ENCODE measurements at regions of chr1 and their contacts with region 1.

Region 1: DNA sequence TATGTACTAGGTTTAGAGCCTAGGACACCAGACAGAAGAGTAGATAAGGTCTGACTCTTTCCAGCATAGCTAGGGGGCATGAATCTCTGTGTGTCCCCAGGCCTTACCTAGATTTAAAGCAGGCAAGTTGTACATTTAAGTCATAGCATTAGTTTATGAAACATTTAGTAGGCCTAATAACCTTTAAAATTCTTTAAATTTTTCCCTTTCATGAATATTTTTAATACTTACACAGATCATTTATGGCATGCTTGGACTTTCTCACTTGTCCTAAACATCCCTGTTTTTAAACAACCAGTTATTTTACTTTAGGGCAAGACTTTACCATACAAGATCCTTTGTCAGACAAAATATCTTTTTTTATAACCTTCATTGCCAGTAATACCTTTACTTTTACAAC is 258.4 kb upstream of the ZRANB2 start:
- DNase-seq: no peak
- H3K4me3 ChIP-seq: no peak overlapping the region
- H3K27me3 ChIP-seq: no peaks in the 10 kb centered on the region
- CTCF ChIP-seq: no peak

Region 2: DNA sequence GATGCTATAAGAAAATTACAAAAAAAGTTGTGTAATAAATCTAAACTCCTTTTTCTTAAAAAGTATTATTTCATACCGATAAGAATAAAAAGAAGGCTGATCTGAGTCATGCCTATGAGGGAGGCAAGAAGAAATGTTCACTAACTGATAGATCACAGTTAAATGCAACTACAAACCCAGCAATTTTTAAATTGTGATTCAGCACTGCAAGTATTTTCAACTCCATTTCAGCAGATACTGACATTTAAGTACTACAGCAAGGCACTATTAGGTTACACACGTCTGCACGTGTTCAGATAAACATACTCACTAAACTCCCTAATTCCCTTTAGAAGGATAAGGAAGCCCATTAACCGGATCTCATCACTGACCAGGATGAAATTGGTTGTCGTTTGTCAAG is 45.1 kb before region 1 on chr1:
- CTCF ChIA-PET with region 1: no interaction called
- POLR2A ChIA-PET with region 1: interaction called, 12 read pairs
- DNase-seq: no peak
- H3K4me3 ChIP-seq: no peak overlapping the region
- H3K27me3 ChIP-seq: no peaks in the 10 kb centered on the region
- CTCF ChIP-seq: no peak